ENCODE measurements at regions of chr2 and their contacts with region 1.

Region 1: GRCh38 chr2:219661197-219661954 is 33.9 kb downstream of the SLC4A3 start:
- DNase-seq: peak in 1 of 2 experiments; percentile 56
- H3K4me3 ChIP-seq: peak overlapping the region; percentile 21; the same call in 1 of the 2 replicates
- H3K27ac ChIP-seq: peak overlapping the region; percentile 94
- H3K4me1 ChIP-seq: peaks cover 29% of the 10 kb centered on the region
- H3K27me3 ChIP-seq: no peaks in the 10 kb centered on the region
- CTCF ChIP-seq: no peak

Region 2: DNA sequence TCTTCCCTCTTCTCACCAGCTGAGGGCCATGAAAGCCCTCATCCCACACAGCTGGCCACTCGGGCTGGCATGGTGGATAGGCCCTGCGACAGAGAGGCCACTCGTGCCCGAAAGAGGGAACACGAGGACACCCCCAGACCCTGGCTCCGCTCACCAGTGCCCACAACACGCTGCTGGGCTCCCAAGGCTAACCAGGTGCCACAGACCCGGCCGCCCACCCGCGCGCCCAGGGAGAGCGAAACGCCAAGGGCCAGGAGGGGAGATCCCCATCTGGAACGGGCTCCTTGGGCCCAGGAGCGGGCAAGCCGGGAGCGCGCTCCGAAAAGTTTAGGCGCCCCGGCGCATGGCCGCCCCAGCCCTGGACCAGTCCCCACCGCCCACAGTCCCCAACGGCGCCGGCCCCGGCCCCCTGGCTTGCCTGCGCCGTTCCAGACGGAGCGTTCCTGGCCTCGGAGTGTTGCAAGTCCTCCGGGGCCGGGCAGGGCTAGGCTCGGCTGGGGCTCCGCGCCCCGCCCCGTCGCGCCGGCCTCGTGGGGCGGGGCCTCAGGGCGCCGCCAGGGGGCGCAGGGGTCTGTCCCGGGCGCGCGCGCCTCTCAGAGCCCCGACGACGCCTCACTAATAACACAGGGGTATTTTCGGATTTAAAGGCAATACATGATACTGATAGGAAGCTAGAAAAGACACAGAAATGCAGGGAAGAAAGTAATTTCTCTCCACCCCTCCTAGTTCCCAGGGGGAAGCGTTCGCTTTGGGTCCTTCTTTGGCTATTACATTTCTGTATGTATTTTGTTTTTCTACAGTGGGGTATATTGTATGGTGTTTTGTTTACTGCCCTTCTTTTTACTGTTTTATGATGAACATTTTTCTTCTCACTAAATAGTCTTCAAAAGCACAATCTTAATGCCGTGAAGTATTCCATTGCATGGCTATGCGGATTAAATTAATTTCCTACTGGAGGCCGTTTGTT is 1369.0 kb before region 1 on chr2 and contains the start of gene TMBIM1:
- CTCF ChIA-PET with region 1: no interaction called
- POLR2A ChIA-PET with region 1: interaction called, 16 read pairs
- intact Hi-C with region 1: no loop called
- DNase-seq: peak; percentile 38 to 85
- H3K4me3 ChIP-seq: peak within 1 kb of the TSS; percentile 89
- H3K27ac ChIP-seq: peak within 1 kb of the TSS; percentile 96
- H3K4me1 ChIP-seq: peaks cover 87% of the 10 kb centered on the region
- H3K27me3 ChIP-seq: no peaks in the 10 kb centered on the region
- CTCF ChIP-seq: peak; percentile 66
- total RNA-seq, gene TMBIM1: 172 and 187 TPM in 2 replicates

Region 3: DNA sequence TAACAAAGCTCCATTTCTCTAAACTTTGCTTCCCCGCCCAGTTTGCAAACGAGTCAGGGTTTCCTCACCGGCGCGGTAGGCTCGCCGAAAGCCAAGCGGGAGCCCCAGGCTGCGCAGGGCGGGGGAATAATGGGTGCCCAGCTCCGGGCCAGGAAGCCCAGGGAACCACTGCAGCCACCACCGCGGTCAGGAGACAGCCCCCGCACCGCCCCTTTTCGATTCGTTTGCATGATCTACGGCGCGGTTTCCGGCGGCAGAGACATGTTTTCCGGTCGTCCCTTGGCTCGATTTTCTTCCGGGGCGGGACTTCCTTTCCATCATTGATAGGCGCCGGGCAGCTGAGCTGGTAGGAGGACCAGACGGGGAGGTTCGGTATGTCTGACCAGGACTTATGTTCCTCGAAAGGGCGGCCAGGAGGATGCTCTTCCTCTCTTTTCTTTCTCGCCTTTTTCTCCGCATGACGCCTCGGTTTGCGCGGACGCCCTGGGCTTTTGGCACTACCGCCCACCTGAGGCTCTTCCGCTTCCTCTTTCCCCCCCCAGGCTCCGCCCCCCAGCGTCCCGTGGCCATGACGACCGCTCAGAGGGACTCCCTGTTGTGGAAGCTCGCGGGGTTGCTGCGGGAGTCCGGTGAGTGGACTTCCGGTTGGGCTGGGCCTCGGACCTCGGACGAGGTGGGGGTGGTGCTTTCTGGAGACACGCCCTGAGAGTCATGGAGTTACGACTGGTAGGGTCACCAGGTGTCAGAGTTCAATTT is 63.6 kb before region 1 on chr2 and contains the start of gene STK11IP:
- CTCF ChIA-PET with region 1: interaction called, 11 read pairs
- POLR2A ChIA-PET with region 1: interaction called, 17 read pairs
- intact Hi-C with region 1: loop called (anchors 1 kb)
- DNase-seq: peak; percentile 93 to 95
- H3K4me3 ChIP-seq: peak within 1 kb of the TSS; percentile 70
- H3K27ac ChIP-seq: peak within 1 kb of the TSS; percentile 85
- H3K4me1 ChIP-seq: peaks cover 19% of the 10 kb centered on the region
- H3K27me3 ChIP-seq: no peaks in the 10 kb centered on the region
- CTCF ChIP-seq: no peak
- total RNA-seq, gene STK11IP: 40.6 and 42.5 TPM in 2 replicates

Region 4: GRCh38 chr2:219642465-219643080 is 18.8 kb before region 1 on chr2:
- CTCF ChIA-PET with region 1: no interaction called
- POLR2A ChIA-PET with region 1: interaction called, 11 read pairs
- intact Hi-C with region 1: loop called (anchors 2 kb)
- DNase-seq: peak; percentile 83 to 93
- H3K4me3 ChIP-seq: no peak overlapping the region
- H3K27ac ChIP-seq: no peak overlapping the region
- H3K4me1 ChIP-seq: peaks cover 18% of the 10 kb centered on the region
- H3K27me3 ChIP-seq: no peaks in the 10 kb centered on the region
- CTCF ChIP-seq: peak; percentile 93

Region 5: DNA sequence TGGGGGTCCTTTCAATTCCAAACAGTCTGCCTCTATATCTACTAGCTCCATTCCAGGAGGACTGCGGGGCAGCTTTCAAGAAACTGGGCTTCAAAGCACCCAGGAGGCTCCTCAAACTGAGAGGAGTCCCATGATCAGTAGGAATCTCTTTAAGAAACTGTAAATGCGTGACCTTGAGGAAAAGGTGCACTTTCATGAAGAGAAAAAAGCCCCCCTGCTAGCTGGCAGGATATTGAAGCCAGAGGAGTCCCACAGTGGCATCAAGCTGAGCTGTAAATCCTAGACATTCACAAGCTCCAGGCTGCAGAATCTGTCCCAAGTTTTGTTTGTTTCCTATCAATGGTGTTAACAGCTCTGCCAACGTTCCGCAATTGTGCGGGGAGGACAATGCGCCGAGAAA is 756.1 kb after region 1 on chr2:
- CTCF ChIA-PET with region 1: no interaction called
- POLR2A ChIA-PET with region 1: interaction called, 13 read pairs
- intact Hi-C with region 1: no loop called
- DNase-seq: no peak
- H3K4me3 ChIP-seq: no peak overlapping the region
- H3K27ac ChIP-seq: no peak overlapping the region
- H3K4me1 ChIP-seq: no peaks in the 10 kb centered on the region
- H3K27me3 ChIP-seq: no peaks in the 10 kb centered on the region
- CTCF ChIP-seq: no peak